Activated B cell treated with CpG ODN at 0.5 μM for 24 hours (primary cell): ENCODE measurements at regions of chr17 and their contacts with region 1.

Region 1: GRCh38 chr17:38605888-38606645 is at the start of gene SRCIN1:
- DNase-seq: peak; percentile 46
- ATAC-seq: peak; percentile 57
- H3K4me3 Mint-ChIP-seq: peak within 1 kb of the TSS; percentile 72
- H3K27ac Mint-ChIP-seq: no peak within 1 kb of the TSS
- H3K4me1 Mint-ChIP-seq: peaks cover 15% of the 10 kb centered on the region
- H3K27me3 Mint-ChIP-seq: peaks cover 59% of the 10 kb centered on the region
- CTCF ChIP-seq: peak; percentile 80
- total RNA-seq, gene SRCIN1: 0.24 and 0.35 TPM in 2 replicates

Region 2: DNA sequence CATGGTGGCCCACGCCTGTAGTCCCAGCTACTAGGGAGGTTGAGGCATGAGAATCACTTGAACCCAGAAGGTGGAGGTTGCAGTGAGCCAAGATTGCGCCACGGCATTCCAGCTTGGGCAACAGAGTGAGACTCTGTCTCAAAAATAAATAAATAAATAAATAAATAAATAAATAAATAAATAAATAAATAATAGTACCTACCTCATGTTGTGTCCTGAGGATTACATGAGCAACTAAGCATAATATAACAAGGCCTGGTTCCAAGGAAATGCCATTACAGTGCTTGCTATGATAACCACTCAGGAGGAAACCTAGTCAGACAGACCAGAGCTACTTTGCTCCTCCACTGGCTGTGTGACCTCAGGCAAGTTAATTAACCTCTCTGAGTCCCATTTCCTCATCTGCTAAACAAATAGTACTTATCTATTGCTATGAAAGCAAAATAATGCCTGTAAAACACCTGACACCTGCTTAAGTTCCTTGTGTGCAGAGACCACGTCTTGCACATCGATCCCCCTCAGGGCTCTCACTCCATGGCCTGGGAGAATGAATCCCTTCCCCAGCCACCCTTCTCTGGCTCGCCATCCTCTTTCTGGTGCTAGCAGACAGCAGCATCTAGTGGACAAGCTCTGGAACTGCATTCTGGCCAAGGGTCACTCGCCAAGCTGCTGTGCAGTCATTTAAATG is 61.2 kb after region 1 on chr17:
- CTCF ChIA-PET with region 1: interaction called, 5 read pairs
- POLR2A ChIA-PET with region 1: no interaction called
- intact Hi-C with region 1: loop called (anchors 2 kb)
- DNase-seq: peak; percentile 39
- ATAC-seq: peak; percentile 87
- H3K4me3 Mint-ChIP-seq: no peak overlapping the region
- H3K27ac Mint-ChIP-seq: no peak overlapping the region
- H3K4me1 Mint-ChIP-seq: peaks cover 8% of the 10 kb centered on the region
- H3K27me3 Mint-ChIP-seq: peaks cover 57% of the 10 kb centered on the region
- CTCF ChIP-seq: peak; percentile 92